Activated naive CD8-positive, alpha-beta T cell treated with anti-CD3 and anti-CD28 coated beads, Interleukin-2, amount 10 ng/mL, durations not matched to agents 7 days and 5 days (primary cell): ENCODE measurements at regions of chr3 and their contacts with region 1.

Region 1: GRCh38 chr3:17151598-17152373 is 267.0 kb downstream of the PLCL2 start:
- DNase-seq: peak; percentile 84
- ATAC-seq: peak; percentile 94
- H3K4me3 Mint-ChIP-seq: peak overlapping the region; percentile 65
- H3K27ac Mint-ChIP-seq: peak overlapping the region; percentile 91
- H3K4me1 Mint-ChIP-seq: peaks cover 53% of the 10 kb centered on the region
- H3K27me3 Mint-ChIP-seq: no peaks in the 10 kb centered on the region

Region 2: GRCh38 chr3:16842272-16843270 is 309.2 kb before region 1 on chr3:
- POLR2A ChIA-PET with region 1: interaction called, 14 read pairs
- DNase-seq: peak; percentile 72
- ATAC-seq: peak; percentile 82
- H3K4me3 Mint-ChIP-seq: peak overlapping the region; percentile 82
- H3K27ac Mint-ChIP-seq: peak overlapping the region; percentile 95
- H3K4me1 Mint-ChIP-seq: peaks cover 47% of the 10 kb centered on the region
- H3K27me3 Mint-ChIP-seq: peaks cover 2% of the 10 kb centered on the region

Region 3: DNA sequence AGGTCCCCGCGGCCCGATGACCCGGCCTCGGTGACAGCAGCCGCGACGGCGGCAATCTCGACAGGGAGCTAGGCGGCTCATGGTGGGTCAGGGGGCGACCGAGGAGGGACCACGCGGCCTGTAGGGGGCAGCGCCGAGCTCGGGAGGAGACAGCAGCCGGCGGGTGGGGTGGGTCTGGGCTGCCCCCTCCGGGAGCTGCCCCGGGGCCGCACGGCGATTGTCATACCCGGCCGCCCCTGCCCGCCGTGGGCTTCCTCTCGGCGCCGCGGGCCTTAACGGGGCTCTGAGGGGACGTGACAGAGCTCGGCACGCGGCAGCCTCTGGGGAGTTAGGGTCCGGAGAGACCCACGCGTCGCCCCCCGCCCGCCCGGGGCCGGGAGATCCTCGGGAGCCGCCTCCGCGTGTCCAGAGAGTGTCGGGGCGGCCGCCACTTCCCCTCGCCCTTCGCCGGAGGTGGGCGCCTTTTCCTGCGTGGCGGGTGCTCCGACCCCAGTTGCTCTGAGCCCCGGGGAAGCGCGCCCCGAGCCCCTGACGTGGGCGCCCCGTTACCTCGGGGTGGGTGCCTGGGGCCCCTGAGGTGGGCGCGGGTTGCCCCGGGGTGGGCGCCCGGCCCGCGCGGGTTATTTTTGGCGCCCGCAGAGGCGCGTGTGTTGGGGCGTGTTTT is 267.6 kb before region 1 on chr3:
- POLR2A ChIA-PET with region 1: interaction called, 32 read pairs
- DNase-seq: peak; percentile 81
- ATAC-seq: peak; percentile 41
- H3K4me3 Mint-ChIP-seq: peak overlapping the region; percentile 95
- H3K27ac Mint-ChIP-seq: peak overlapping the region; percentile 96
- H3K4me1 Mint-ChIP-seq: peaks cover 23% of the 10 kb centered on the region
- H3K27me3 Mint-ChIP-seq: peaks cover 2% of the 10 kb centered on the region

Region 4: DNA sequence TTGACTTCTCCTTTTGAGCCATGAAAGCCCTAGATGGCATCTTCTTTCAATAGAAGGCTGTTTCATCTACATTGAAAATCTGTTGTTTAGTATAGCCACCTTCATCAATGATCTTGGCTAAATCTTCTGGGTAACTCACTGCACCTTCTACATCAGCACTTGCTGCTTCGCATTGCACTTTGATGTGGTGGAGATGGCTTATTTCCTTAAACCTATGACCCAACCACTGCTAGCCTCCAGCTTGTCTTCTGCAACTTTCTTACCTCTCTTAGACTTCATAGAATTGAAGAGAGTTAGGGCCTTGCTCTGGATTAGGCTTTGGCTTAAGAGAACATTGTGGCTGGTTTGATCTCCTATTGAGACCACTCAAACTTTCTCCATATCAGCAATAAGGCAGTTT is 77.2 kb before region 1 on chr3:
- POLR2A ChIA-PET with region 1: interaction called, 18 read pairs
- DNase-seq: no peak
- ATAC-seq: peak; percentile 97
- H3K4me3 Mint-ChIP-seq: peak overlapping the region; percentile 74
- H3K27ac Mint-ChIP-seq: peak overlapping the region; percentile 90
- H3K4me1 Mint-ChIP-seq: peaks cover 60% of the 10 kb centered on the region
- H3K27me3 Mint-ChIP-seq: no peaks in the 10 kb centered on the region

Region 5: GRCh38 chr3:17081520-17081919 is 70.3 kb before region 1 on chr3:
- POLR2A ChIA-PET with region 1: interaction called, 12 read pairs
- DNase-seq: no peak
- ATAC-seq: no peak
- H3K4me3 Mint-ChIP-seq: no peak overlapping the region
- H3K27ac Mint-ChIP-seq: no peak overlapping the region
- H3K4me1 Mint-ChIP-seq: peaks cover 54% of the 10 kb centered on the region
- H3K27me3 Mint-ChIP-seq: no peaks in the 10 kb centered on the region

Region 6: DNA sequence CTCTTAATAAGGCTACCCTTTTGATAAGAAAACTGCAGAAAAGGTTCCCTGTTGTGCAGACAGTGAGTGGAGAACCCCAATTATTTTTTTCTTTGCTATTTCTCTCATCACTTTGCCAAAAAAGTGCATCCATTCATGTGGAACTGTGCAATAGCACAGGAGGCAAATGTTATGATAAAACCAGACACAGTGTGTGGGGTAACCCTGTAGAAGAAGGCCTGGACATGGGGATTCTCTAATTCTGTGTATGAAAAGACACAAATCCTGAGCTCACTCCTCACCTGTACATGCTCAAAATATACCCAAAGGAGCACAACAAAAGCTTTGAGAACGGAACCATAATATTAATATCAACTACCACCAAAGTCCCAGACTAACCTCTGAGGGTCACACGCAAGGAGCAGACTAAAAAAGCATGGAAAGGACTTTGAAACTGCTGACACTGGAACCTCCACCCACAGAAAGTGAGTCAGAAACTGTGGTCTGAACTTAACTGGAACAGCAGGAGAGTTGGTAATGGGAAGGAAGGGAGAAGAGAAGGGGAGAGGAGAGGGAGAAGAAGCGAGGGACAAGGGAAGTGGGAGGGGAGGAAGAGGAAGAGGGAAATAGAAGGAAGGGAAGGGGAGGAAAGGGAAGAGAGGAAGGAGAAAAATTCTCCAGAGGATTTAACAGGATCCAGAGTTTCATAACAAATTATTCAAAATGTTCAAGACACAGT is 290.7 kb after region 1 on chr3:
- POLR2A ChIA-PET with region 1: no interaction called
- DNase-seq: no peak
- ATAC-seq: no peak
- H3K4me3 Mint-ChIP-seq: no peak overlapping the region
- H3K27ac Mint-ChIP-seq: no peak overlapping the region
- H3K4me1 Mint-ChIP-seq: peaks cover 1% of the 10 kb centered on the region
- H3K27me3 Mint-ChIP-seq: no peaks in the 10 kb centered on the region